ENCODE measurements at regions of chr20 and their contacts with region 1.

Region 1: DNA sequence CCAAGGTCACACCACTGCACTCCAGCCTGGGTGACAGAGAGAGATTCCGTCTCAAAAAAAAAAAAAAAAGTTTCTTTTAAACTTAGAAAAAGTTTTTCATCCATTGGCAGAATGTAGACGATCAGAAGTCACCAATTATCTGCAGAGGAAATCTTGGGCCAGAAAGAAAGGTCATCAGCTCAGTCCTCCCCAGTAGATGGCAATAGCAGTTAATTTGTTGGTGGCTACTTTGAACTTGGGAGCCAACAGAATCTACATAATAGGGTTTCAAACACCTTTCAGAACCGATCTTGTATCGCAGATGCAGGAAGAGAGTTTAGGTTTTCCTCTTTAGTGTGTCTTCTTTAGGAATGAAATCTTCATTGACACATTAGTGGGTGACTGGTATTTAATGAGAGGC is 41.7 kb downstream of the LBP start:
- DNase-seq: no peak

Region 2: GRCh38 chr20:38412877-38413577 is 25.1 kb after region 1 on chr20:
- intact Hi-C with region 1: loop called (anchors 2 kb)
- DNase-seq: no peak

Region 3: DNA sequence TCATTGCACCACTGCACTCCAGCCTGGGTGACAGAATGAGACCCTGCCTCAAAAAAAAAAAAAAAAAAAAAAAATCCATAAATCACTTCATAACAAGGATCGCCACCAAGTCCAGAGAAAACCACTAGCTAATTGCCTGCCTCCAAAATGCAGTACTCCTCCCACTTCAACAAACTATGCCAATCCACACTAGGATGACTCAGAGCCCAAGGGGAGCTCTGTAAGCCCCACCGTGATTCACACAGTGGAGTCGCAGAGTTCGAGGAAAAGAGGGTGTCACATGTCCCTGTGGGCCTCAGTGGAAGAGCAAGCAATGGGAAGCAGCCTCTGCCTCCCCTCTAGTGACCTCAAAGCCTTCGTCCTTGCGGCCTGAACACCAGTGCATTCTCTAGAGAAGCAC is 38.1 kb after region 1 on chr20:
- intact Hi-C with region 1: no loop called
- DNase-seq: peak in 2 of 10 donors; percentile 40 to 91

Measured in posterior cingulate gyrus (tissue), 11 donors.